Dorsolateral prefrontal cortex (tissue), 120 donors: ENCODE measurements at regions of chr9 and their contacts with region 1.

Region 1: DNA sequence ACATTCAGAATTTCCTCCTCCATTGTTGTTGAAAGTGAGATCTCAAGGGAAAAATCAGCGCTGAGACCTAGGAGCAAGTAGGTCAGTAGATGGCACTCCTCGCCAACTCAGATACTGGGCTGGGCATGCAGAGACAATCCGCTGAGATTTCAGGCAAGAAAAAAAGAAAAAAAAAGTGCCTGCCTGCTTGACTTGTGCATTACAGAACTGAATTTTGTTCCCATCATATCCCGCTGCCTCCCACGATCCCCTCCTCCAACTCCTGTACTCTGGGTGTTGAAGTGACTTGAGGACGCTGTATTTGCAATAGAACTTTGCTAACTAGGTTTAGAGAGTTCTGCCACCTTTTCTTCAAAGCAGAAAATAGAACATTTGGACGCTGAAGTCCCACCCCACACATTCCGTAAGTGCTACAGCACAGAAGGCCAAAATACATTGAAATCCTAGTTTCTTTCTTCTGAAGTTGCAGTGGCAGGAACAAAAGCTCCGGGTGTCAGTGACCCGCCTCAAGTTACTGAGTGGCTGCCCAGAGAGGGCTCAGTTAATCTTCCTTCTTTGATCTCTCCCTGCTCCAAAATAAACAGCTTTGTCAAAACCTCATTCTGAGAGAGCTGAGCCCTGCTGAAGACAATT is 265.8 kb downstream of the MLLT3 start:
- DNase-seq: peak; percentile 37 to 79 (median 68)
- H3K4me3 ChIP-seq: peak overlapping the region in 33 of 59 donors; percentile 1 to 46 (median 26)
- H3K27ac ChIP-seq: peak overlapping the region in 34 of 59 donors; percentile 0 to 67 (median 35)
- H3K27me3 ChIP-seq: no peaks in the 10 kb centered on the region
- CTCF ChIP-seq: peak; percentile 35 to 84 (median 74)

Region 2: DNA sequence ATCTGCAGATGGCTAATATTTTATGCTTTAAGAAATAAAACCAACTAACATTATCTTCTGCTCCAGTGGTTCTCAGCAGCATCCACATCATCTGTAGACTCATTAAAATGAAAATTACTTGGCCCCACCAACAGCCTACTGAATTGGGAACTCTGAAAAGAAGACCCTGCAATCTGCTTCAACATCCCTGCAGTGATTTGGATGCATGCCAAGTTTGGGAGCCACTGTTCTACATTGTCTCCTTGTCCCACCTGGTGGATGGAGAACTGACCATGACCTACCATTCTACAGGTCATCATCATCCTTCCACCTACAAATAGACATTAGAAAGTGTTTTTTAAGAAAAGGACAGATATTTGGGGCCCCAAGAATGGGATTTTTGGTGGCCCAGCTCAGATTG is 876.6 kb before region 1 on chr9:
- intact Hi-C with region 1: loop called in 1 of 2 experiments (anchors 5 kb)
- DNase-seq: no peak
- H3K4me3 ChIP-seq: no peak overlapping the region
- H3K27ac ChIP-seq: peak overlapping the region; percentile 79 to 100 (median 97)
- H3K27me3 ChIP-seq: no peaks in the 10 kb centered on the region
- CTCF ChIP-seq: no peak

Region 3: DNA sequence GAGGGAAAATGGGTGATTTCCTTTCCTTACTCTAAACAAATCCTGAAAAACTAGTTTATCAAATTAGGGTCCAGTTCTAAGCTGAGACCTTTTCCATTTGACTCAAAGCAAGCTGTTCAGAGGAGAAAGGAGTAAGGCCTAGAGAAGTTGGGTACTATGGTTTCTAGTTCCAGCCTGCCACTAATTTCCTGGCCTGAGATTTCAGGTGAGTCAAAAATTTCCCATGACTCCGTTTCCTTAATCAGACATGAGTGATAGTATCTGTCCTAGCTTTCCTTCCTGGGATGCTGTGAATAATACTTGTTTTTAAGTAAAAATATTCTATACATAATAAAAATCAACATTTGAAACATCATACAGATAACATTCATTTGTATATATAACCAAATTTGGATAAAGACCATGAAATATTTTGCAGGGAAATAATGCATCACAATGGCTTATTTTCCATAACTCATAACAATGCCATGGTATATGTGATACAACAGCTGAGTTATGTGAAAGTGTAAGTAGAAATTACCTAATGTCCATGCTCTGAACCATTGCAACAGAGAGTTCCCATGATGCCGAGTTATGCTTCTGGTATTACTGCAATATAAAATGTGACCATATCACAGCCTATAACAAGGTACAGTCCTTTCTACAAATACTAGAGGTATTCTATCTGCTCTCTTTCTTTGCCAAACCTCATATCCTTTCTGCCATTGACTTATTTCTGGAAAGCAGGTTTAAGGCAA is 123.1 kb after region 1 on chr9:
- intact Hi-C with region 1: loop called in 1 of 2 experiments (anchors 5 kb)
- DNase-seq: no peak
- H3K4me3 ChIP-seq: no peak overlapping the region
- H3K27ac ChIP-seq: no peak overlapping the region
- H3K27me3 ChIP-seq: no peaks in the 10 kb centered on the region
- CTCF ChIP-seq: no peak

Region 4: DNA sequence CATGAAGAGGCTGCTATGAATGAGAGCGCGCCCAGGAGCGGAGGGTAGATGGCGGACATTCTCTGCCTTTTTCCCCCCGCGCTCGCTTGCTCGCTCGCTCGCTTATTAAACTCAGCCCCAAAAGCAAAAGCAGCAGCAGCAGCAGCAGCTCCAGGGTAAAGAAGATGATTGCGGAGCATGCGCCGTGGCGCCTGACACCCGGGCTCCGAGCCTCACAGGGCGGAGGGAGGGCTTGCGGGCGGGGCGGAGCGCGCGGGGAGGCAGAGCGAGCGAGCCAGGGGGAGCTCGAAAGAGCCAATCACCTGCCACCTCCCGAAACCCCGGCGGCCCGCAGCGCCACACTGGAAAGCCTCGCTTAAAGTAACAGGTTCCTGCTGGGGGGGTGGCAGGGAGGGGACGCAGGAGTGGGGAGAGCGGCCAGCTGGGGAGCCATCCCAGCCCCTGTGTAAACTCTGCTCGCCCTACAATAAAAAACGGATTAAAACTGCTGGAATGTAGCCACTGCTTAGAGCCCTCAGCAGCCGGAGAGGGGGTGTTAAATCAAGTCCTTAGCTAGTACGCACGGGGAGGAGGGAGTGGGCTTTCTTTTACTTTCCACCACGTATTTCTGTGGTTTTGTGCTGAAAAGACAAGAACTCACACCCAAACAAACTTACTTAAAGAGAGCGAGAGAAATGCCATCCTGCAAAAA is 266.0 kb after region 1 on chr9 and contains the start of gene MLLT3:
- intact Hi-C with region 1: loop called (anchors 5 kb)
- DNase-seq: peak; percentile 94 to 98 (median 96)
- H3K4me3 ChIP-seq: peak within 1 kb of the TSS; percentile 61 to 97 (median 90)
- H3K27ac ChIP-seq: peak within 1 kb of the TSS; percentile 78 to 99 (median 97)
- H3K27me3 ChIP-seq: no peaks in the 10 kb centered on the region
- CTCF ChIP-seq: peak in 50 of 56 donors; percentile 9 to 68 (median 45)
- total RNA-seq, gene MLLT3: 18.6 to 58.3 (median 34.2) TPM

Region 5: GRCh38 chr9:20684035-20684872 is 327.7 kb after region 1 on chr9 and contains the start of gene FOCAD:
- intact Hi-C with region 1: loop called in 1 of 2 experiments (anchors 10 kb)
- DNase-seq: peak; percentile 90 to 99 (median 96)
- H3K4me3 ChIP-seq: peak within 1 kb of the TSS; percentile 49 to 99 (median 93)
- H3K27ac ChIP-seq: peak within 1 kb of the TSS in 58 of 59 donors; percentile 43 to 94 (median 85)
- H3K27me3 ChIP-seq: no peaks in the 10 kb centered on the region
- CTCF ChIP-seq: peak in 39 of 56 donors; percentile 3 to 52 (median 31)
- total RNA-seq, gene FOCAD: 51.6 to 172 (median 114) TPM

Region 6: DNA sequence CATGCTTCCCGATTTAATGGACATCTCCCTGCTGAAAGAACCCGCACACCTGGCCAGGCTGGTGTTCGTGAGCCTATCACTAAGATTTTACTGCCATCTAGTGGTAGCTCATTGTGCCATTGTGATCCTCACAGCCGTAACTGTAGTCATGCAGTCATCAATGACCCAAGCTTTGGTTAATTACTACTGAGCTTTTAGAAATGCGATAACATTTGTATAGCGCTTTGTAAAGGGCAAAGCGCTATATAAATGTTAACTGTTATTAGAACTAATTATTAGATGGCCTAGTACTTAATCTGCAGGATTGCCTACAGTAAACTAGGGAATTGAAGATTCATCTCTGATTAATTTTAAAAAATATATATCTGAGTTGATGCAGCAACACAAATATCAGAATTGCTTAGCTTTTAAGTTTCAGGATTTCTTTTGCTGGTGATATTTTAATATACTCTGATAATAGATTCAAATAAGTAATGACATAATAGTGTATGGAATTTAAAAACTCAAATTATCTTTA is 584.7 kb after region 1 on chr9:
- intact Hi-C with region 1: loop called (anchors 5 kb)
- DNase-seq: peak in 6 of 10 donors; percentile 30 to 63 (median 44)
- H3K4me3 ChIP-seq: no peak overlapping the region
- H3K27ac ChIP-seq: no peak overlapping the region
- H3K27me3 ChIP-seq: no peaks in the 10 kb centered on the region
- CTCF ChIP-seq: peak; percentile 57 to 98 (median 89)

Region 7: GRCh38 chr9:21110708-21111576 is 754.4 kb after region 1 on chr9:
- intact Hi-C with region 1: loop called in 1 of 2 experiments (anchors 5 kb)
- DNase-seq: peak in 1 of 10 donors; percentile 27
- H3K4me3 ChIP-seq: no peak overlapping the region
- H3K27ac ChIP-seq: no peak overlapping the region
- H3K27me3 ChIP-seq: no peaks in the 10 kb centered on the region
- CTCF ChIP-seq: peak; percentile 50 to 92 (median 82)